H1 (cell line): ENCODE measurements at regions of chr16 and their contacts with region 1.

Region 1: DNA sequence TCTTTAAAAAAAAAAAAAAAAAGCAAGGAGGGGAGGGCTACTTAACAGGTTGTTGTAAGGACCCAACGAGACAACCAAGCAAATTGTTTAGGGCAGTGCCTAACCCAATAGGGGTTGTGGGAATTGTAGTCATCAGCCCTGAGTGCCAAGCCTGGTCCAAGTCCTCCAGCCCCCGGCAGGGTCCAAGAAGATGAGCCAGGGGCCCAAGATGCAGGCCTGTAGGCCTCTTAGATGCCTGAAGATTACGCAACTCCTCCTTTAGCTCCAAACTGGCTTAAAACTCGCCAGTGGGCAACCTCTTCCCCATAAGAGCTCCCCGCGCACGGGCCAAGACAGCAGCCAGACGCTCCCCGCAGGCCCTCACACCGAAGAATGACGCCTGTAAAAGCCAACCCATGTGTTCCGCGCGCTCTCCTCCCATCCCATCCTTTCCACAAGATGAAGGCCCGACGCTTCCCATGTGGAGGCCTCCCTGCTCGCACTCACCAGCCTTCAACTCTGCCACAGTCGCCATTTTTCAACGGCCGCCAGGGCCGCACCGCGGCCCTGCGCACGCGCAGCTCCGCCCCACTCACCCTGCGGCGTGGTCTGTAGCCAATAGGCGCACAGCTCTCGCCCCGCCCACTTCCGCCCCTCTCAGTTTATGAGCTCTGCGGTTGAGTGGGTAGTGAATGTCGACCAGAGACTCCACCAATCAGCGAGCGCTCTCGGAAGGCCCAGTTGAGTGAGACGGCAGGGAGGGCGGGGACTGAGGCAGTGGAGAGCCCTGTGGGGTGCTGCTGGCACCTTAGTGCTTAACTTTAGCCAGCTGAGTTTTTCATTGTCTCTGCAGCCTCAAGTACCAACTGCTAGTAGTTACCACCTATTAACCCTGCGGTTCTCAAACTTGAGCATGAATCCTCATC is at the start of gene CEP20:
- DNase-seq: peak; percentile 98
- H3K4me3 ChIP-seq: peak within 1 kb of the TSS; percentile 97 to 100 (median 98)
- H3K27ac ChIP-seq: peak within 1 kb of the TSS; percentile 85
- H3K4me1 ChIP-seq: peaks cover 3 to 6% (median 5%) of the 10 kb centered on the region in 4 experiments; a peak in 5 of 7 replicates
- H3K27me3 ChIP-seq: no peaks in the 10 kb centered on the region
- CTCF ChIP-seq: no peak
- EP300 ChIP-seq: no peak
- POLR2A ChIP-seq: peak in 1 of 2 experiments; percentile 87; a peak in 2 of 3 replicates
- RAD21 ChIP-seq: no peak
- total RNA-seq, gene CEP20: 33.2 and 49.0 TPM in 2 replicates

Region 2: DNA sequence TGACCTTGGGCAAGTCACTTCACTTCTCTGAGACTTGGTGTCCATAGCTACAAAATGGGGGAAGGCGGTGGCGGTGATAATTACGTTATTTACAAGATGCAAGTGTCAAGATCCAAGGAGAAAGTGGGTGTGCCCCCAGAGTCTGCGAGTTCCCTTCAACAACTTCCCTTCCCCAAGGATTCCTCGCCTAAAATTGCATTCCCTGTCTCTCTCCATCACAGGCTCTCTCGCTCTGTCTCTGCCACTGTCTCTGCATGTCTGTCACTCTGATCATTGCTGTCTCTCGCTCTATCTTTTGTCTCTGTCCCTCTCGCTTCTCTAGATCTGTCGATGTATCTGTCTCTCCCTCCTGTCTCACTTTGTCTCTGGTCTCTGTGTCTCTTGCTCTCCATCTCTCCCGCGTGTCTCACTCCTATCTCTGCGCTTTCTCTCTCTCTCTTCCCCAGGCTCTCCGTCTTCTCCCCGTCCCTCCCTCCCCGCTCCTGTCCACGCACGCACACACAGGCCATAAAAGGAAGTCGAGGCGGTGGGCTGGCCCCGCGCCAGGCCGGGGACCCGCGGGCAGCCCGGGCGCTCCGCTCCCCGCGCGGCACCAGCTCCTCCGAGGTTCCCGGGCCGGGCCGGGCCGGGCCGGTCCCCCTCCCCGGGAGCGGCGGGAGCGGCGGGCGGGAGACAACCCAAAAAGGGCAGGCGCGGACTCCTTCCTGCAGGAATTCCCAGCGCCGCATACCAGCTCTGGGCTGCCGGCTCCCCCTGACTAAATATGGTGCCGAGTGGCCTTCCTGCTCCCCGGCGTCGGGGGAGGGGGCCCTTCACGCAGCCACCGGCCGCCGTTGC is 30.4 kb before region 1 on chr16:
- CTCF ChIA-PET with region 1: no interaction called
- POLR2A ChIA-PET with region 1: interaction called, 12 read pairs
- DNase-seq: peak in 1 of 2 experiments; percentile 73
- H3K4me3 ChIP-seq: peak overlapping the region; percentile 55 to 82 (median 68)
- H3K27ac ChIP-seq: no peak overlapping the region
- H3K4me1 ChIP-seq: no peaks in the 10 kb centered on the region; a peak in 2 of 7 replicates
- H3K27me3 ChIP-seq: peaks cover 4 to 42% (median 31%) of the 10 kb centered on the region in 4 experiments
- CTCF ChIP-seq: no peak
- EP300 ChIP-seq: no peak
- POLR2A ChIP-seq: peak in 1 of 2 experiments; percentile 45; a peak in 2 of 3 replicates
- RAD21 ChIP-seq: no peak

Region 3: DNA sequence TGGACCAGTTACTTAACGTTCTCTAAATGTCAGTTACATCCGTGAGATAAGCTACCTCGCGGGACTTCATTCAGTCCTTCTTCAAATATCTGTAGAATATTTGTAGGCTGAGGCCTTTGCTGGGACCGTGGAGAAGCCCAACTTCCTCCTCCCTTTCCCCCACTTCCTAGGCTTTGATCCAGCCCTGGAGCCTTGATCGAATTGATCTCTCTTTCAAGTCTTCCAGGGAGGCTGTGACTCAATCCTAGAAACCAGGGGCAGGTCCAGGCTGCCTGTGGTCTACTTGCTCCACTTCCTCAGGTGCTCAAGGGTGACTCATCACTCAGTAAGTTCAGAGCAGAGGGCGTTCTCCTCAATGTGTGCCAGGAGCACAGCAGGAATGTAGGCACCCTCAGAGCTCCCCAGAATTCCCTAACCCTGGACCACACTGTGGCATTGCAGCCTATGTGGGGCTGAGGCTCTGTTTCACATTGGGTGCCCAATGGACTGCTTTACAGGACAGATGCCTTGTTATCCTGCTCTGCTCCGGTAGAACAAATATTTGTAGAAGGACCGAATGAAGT is 11.3 kb after region 1 on chr16:
- CTCF ChIA-PET with region 1: interaction called, 6 read pairs
- POLR2A ChIA-PET with region 1: interaction called, 20 read pairs
- DNase-seq: no peak
- H3K4me3 ChIP-seq: no peak overlapping the region
- H3K27ac ChIP-seq: no peak overlapping the region
- H3K4me1 ChIP-seq: no peaks in the 10 kb centered on the region
- H3K27me3 ChIP-seq: no peaks in the 10 kb centered on the region
- CTCF ChIP-seq: no peak
- EP300 ChIP-seq: no peak
- POLR2A ChIP-seq: no peak
- RAD21 ChIP-seq: no peak

Region 4: GRCh38 chr16:15932939-15933338 is 44.6 kb after region 1 on chr16:
- CTCF ChIA-PET with region 1: no interaction called
- POLR2A ChIA-PET with region 1: no interaction called
- DNase-seq: no peak
- H3K4me3 ChIP-seq: no peak overlapping the region
- H3K27ac ChIP-seq: no peak overlapping the region
- H3K4me1 ChIP-seq: no peaks in the 10 kb centered on the region
- H3K27me3 ChIP-seq: no peaks in the 10 kb centered on the region
- CTCF ChIP-seq: no peak
- EP300 ChIP-seq: no peak
- POLR2A ChIP-seq: no peak
- RAD21 ChIP-seq: no peak